CD14-positive monocyte (primary cell): ENCODE measurements at regions of chr12 and their contacts with region 1.

Region 1: DNA sequence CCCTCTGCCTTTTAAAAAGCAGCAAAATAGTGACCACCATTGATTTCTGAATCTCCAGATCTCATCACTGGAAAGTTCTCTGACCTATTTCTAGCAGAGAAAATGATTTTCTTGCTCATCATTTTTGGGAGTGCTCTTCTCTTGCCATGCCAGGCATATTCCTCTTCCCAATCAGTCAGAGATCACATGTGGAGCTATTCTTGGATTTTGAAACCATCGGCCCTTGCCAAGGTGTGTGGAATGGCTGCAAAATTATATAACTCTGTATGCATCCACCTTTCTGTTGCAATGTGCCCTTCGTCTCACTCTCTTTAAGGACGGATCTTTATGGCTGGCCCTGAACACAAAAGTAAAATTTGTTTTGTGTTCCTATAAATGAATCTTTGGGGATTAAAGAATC is 25.5 kb upstream of the LDHB start:
- DNase-seq: no peak
- H3K4me3 ChIP-seq: no peak overlapping the region
- H3K4me3 Mint-ChIP-seq: no peak overlapping the region
- H3K27ac ChIP-seq: no peak overlapping the region
- H3K27ac Mint-ChIP-seq: no peak overlapping the region
- H3K4me1 ChIP-seq: no peaks in the 10 kb centered on the region
- H3K4me1 Mint-ChIP-seq: peaks cover 11% of the 10 kb centered on the region
- H3K27me3 ChIP-seq: no peaks in the 10 kb centered on the region
- H3K27me3 Mint-ChIP-seq: peaks cover 1 to 2% (median 2%) of the 10 kb centered on the region in 3 donors
- CTCF ChIP-seq: no peak

Region 2: DNA sequence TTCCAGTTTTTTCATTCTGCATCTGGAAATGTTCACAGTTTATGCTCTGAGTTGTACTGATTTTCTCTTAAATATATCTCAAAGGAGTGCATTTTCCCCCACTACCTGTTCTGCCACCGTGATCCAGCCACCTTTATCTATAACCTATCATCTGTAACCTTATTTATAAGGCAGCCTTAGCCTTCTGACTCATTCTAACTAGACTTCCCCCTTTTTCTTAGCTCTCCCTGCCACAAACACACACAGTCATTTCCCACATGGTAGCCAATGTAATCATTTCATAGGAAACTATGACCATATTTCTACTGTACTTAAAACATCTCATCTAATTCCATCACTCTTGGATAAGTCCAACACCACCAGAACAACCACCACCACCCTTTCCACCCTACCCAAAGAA is 67.7 kb before region 1 on chr12:
- intact Hi-C with region 1: loop called in 1 of 2 experiments (anchors 5 kb)
- DNase-seq: peak; percentile 56 to 68 (median 65)
- H3K4me3 ChIP-seq: peak overlapping the region in 1 of 3 experiments; percentile 61
- H3K4me3 Mint-ChIP-seq: peak overlapping the region in 1 of 2 donors; percentile 56
- H3K27ac ChIP-seq: peak overlapping the region in 1 of 2 donors; percentile 66
- H3K27ac Mint-ChIP-seq: peak overlapping the region; percentile 37 to 80 (median 52)
- H3K4me1 ChIP-seq: peaks cover 30 to 38% of the 10 kb centered on the region in 2 donors
- H3K4me1 Mint-ChIP-seq: peaks cover 30% of the 10 kb centered on the region
- H3K27me3 ChIP-seq: no peaks in the 10 kb centered on the region
- H3K27me3 Mint-ChIP-seq: peaks cover 0 to under 1% (median 0%) of the 10 kb centered on the region in 3 donors
- CTCF ChIP-seq: no peak